ENCODE measurements at regions of chr6 and their contacts with region 1.

Region 1: DNA sequence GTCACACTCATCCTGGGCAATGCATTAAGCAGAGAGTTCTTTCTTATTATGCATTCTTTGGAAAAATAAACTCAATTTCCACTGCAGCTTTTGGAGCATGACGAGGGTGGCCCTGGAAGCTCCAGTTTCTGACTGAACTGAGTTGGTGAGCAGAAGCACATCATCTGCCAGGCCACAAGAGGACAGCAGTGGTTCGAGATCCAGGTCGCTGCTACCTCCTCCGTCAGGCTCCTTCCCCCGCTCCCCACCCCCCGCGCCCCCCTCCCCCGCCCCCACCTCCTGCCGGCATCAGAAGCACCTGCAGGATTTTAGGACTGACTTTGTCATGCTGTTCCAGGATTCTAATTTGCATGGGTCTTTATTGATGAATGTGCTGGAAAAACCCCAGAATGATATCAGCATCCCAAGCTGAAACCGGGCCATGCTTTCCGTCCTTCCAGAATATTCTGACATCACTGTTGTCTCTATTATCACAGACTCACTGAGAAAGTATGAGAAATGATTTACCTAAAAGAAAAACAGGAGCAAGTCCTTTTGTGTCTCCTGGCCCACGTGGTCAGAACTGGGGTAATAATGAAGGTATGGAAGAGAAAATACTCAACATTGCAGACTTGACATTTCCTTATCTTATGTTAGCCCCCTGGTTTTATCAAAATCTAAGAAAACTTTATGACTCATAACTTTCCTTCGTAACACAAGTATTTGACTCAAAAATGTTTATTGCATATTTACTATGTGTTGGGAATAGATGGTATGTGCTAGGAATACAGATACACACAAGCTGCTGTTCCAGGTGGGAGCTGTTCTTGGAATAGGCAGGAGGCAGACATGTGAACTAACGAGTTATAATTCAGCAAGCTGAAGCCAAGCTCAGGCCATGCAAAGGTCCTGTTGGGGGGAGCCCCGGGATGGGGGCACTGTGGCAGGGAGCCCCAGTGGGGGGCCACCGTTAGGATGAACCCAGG is 220.2 kb upstream of the EXOC2 start:
- DNase-seq: peak; percentile 21
- H3K4me3 ChIP-seq: no peak overlapping the region
- H3K27ac ChIP-seq: no peak overlapping the region
- H3K4me1 ChIP-seq: no peaks in the 10 kb centered on the region
- H3K27me3 ChIP-seq: peaks cover 17% of the 10 kb centered on the region
- CTCF ChIP-seq: peak in 4 of 5 experiments; percentile 24 to 55 (median 37)
- EP300 ChIP-seq: no peak
- POLR2A ChIP-seq: no peak

Region 2: DNA sequence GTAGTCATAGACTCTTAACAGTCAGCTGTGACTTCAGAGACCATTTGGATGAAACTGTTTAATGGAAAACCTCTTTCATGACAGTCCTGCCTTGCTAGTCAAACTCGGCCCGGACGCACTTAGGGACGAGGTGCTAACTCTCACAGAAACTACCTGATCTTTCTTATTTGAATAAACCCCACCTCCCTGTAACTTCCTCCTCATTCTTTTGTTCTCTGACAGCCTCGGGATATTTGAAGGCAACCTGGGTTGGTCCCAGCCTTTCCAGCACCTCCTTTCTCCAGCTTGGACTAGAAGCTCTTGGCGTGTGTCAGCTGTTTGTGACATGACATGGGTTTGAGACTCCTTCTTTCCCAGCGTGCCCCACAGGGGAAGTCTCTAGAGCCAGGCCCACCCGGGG is 45.0 kb before region 1 on chr6:
- in situ Hi-C with region 1: no loop called
- intact Hi-C with region 1: no loop called
- DNase-seq: no peak
- H3K4me3 ChIP-seq: no peak overlapping the region
- H3K27ac ChIP-seq: no peak overlapping the region
- H3K4me1 ChIP-seq: peaks cover 0 to 3% (median 0%) of the 10 kb centered on the region in 4 donors
- H3K27me3 ChIP-seq: no peaks in the 10 kb centered on the region
- CTCF ChIP-seq: no peak
- EP300 ChIP-seq: no peak
- POLR2A ChIP-seq: no peak

Region 3: GRCh38 chr6:1113921-1114420 is 200.8 kb after region 1 on chr6:
- in situ Hi-C with region 1: no loop called
- intact Hi-C with region 1: no loop called
- DNase-seq: no peak
- H3K4me3 ChIP-seq: no peak overlapping the region
- H3K27ac ChIP-seq: no peak overlapping the region
- H3K4me1 ChIP-seq: no peaks in the 10 kb centered on the region
- H3K27me3 ChIP-seq: no peaks in the 10 kb centered on the region
- CTCF ChIP-seq: no peak
- EP300 ChIP-seq: no peak
- POLR2A ChIP-seq: no peak

Region 4: GRCh38 chr6:1335367-1336037 is 422.3 kb after region 1 on chr6:
- in situ Hi-C with region 1: loop called in 2 of 4 experiments (anchors 25 kb)
- intact Hi-C with region 1: no loop called
- DNase-seq: peak; percentile 68
- H3K4me3 ChIP-seq: no peak overlapping the region
- H3K27ac ChIP-seq: peak overlapping the region; percentile 3 to 22 (median 18)
- H3K4me1 ChIP-seq: peaks cover 0 to 29% (median 11%) of the 10 kb centered on the region in 4 donors
- H3K27me3 ChIP-seq: peaks cover 7% of the 10 kb centered on the region
- CTCF ChIP-seq: no peak
- EP300 ChIP-seq: no peak
- POLR2A ChIP-seq: no peak

Measured in transverse colon (tissue), 4 donors.